Activated naive CD4-positive, alpha-beta T cell treated with anti-CD3 and anti-CD28 coated beads, Interleukin-2, amount 10 ng/mL, durations not matched to agents 7 days and 5 days (primary cell): ENCODE measurements at regions of chr12 and their contacts with region 1.

Region 1: DNA sequence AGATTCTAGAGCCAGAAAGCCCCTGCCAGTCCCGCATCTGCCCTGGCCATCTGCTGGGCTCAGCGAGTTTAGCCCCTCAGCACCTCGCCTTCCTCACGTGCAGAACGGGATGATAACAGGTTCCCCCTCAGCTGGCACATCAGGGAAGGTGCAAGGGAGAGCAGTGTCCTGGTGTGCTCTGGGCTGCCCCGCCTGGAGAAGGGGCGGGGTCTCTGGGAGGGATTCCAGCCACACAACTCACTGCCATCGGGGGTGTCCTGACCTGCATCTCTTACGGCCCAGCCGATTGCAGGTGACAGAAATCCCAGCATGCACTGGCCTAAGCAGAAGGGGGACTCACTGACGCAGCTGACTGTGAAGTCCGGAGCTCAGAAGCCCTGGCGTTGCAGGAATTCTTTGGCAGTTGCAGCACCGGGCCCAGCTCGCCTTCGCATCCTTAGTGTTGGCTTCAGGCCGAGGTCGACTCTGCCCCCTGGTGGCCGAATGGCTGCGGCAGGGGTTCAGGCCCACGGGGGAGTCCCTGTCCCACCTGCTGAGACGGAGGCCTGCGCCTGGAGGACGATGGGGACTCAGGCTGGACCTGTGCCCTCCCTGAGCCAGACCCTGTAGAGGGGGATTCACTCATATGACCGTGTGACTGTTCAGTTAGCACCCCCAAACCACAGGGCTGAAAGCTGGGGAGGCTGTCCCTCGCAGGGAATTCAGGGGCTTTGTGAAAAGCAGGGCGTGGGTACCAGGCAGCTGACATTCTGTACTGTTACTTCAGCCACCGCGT is 178.6 kb downstream of the ADGRD1 start:
- DNase-seq: peak; percentile 73
- H3K4me3 Mint-ChIP-seq: no peak overlapping the region
- H3K27ac Mint-ChIP-seq: no peak overlapping the region
- H3K4me1 Mint-ChIP-seq: no peaks in the 10 kb centered on the region
- H3K27me3 Mint-ChIP-seq: peaks cover 4% of the 10 kb centered on the region

Region 2: DNA sequence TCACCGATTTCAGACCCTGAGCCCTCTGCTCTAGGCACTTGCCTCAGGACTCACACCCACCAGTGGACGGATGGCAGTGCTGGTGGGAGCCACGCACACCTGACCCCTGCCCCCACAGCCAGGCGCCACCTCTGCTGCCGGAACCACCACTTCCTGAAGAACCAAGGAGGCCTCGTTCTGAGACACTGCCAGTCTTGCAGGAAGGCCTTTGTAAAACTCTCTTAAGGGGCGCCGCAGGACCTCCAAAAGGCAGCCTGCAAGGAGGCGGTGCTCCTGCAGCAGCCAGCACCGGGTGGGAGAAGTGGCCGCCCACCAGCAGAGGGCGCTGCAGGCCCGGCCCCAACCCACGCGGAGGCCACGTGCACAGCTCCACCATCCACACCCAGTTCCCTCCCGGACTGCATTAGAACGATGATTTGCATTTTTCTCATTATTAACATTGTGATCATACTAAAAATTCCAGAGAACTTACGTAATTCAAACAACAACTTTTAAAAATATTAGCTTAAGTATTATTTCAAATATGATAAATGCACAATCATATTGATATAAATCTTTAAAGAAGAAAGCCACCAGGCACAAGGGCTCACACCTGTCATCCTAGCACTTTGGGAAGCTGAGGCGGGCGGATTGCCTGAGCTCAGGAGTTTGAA is 306.0 kb before region 1 on chr12:
- CTCF ChIA-PET with region 1: interaction called, 14 read pairs
- DNase-seq: peak; percentile 72
- H3K4me3 Mint-ChIP-seq: no peak overlapping the region
- H3K27ac Mint-ChIP-seq: no peak overlapping the region
- H3K4me1 Mint-ChIP-seq: peaks cover 23% of the 10 kb centered on the region
- H3K27me3 Mint-ChIP-seq: no peaks in the 10 kb centered on the region

Region 3: DNA sequence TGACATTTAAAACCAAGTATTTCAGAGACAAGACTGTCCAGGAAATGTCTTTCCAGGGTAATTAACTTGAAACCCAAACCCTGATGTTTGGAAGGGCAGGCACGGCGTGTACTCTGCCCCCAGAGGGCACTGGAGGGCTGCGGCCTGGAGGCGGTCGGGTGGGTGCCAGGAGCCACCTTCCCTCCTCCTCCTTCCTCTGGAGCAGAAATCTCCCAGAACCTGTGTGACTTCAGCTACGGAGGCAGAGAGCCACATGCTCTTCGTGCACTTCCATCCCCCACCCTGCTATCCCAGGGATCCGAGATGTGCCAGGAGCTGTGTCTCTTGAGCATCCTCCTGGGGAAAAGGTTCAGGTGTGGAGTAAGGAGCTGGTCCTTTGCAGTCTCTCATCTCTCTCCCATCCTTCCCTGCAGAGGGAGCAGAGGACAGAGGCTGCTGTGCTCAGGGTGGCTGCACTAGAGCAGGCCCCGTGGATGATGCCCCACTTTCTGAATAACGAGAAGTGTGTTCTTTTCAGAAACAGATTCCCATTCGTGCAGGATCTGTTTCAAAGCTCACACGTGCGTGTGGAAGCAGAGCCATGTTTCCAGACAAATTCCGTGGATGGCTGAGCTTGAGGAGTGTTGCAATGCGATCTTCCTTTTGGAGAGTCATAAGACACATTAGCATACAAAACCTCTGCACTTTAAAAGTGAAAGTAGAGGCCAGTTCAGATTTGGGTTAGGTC is 15.8 kb before region 1 on chr12:
- CTCF ChIA-PET with region 1: interaction called, 10 read pairs
- DNase-seq: no peak
- H3K4me3 Mint-ChIP-seq: no peak overlapping the region
- H3K27ac Mint-ChIP-seq: no peak overlapping the region
- H3K4me1 Mint-ChIP-seq: no peaks in the 10 kb centered on the region
- H3K27me3 Mint-ChIP-seq: peaks cover 17% of the 10 kb centered on the region